ENCODE measurements at regions of chr1 and their contacts with region 1.

Region 1: DNA sequence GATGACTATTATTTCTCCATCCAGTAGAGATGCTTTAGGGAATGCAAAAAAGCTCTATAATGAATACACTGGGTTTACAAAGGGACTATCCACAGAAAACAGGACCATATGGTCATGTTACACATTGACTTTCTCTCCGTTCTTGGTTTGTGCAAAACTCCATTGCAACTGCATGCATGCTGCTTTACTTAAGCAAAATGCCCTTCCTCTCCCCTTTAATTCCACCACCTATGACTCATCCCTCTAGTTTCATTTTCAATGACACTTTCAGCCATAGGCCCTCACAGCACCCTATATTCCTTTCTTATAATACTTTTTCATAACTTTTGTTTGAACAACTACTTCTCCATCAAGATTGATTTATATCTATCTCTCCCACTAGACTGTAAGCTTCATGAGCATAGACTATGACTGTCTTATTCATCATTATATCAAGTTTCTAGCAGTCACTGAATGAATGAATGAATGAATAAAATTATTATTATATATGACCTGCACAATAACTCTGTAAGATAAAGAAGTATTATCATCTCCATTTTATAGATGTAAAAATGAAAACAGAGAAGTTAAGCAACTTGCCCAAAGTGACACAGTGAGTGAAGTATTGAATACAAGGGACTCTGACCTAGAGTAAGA is 248.9 kb downstream of the PLPP3 start:
- DNase-seq: peak; percentile 68
- ATAC-seq: peak; percentile 70
- H3K4me3 ChIP-seq: no peak overlapping the region
- H3K27ac ChIP-seq: no peak overlapping the region
- H3K4me1 ChIP-seq: no peaks in the 10 kb centered on the region; the same call in 1 of the 2 replicates
- H3K27me3 ChIP-seq: no peaks in the 10 kb centered on the region
- CTCF ChIP-seq: no peak
- EP300 ChIP-seq: peak; percentile 41 to 67; a peak in 2 of 4 replicates
- POLR2A ChIP-seq: no peak
- RAD21 ChIP-seq: no peak

Region 2: GRCh38 chr1:56056438-56057287 is 273.8 kb before region 1 on chr1:
- CTCF ChIA-PET with region 1: no interaction called
- POLR2A ChIA-PET with region 1: no interaction called
- RAD21 ChIA-PET with region 1: interaction called, 4 read pairs
- SMC1A ChIA-PET with region 1: no interaction called
- in situ Hi-C with region 1: no loop called
- intact Hi-C with region 1: loop called (anchors 5 kb)
- DNase-seq: no peak
- ATAC-seq: no peak; the same call in 2 of the 3 replicates
- H3K4me3 ChIP-seq: no peak overlapping the region
- H3K27ac ChIP-seq: no peak overlapping the region
- H3K4me1 ChIP-seq: peaks cover 2% of the 10 kb centered on the region
- H3K27me3 ChIP-seq: no peaks in the 10 kb centered on the region
- CTCF ChIP-seq: no peak
- EP300 ChIP-seq: no peak
- POLR2A ChIP-seq: no peak
- RAD21 ChIP-seq: no peak

Region 3: GRCh38 chr1:56235909-56236510 is 94.5 kb before region 1 on chr1:
- CTCF ChIA-PET with region 1: no interaction called
- POLR2A ChIA-PET with region 1: no interaction called
- RAD21 ChIA-PET with region 1: no interaction called
- SMC1A ChIA-PET with region 1: interaction called, 7 read pairs
- in situ Hi-C with region 1: no loop called
- intact Hi-C with region 1: loop called (anchors 5 kb)
- DNase-seq: no peak
- ATAC-seq: no peak
- H3K4me3 ChIP-seq: no peak overlapping the region
- H3K27ac ChIP-seq: no peak overlapping the region
- H3K4me1 ChIP-seq: no peaks in the 10 kb centered on the region
- H3K27me3 ChIP-seq: no peaks in the 10 kb centered on the region
- CTCF ChIP-seq: no peak
- EP300 ChIP-seq: no peak
- POLR2A ChIP-seq: no peak
- RAD21 ChIP-seq: no peak

Region 4: DNA sequence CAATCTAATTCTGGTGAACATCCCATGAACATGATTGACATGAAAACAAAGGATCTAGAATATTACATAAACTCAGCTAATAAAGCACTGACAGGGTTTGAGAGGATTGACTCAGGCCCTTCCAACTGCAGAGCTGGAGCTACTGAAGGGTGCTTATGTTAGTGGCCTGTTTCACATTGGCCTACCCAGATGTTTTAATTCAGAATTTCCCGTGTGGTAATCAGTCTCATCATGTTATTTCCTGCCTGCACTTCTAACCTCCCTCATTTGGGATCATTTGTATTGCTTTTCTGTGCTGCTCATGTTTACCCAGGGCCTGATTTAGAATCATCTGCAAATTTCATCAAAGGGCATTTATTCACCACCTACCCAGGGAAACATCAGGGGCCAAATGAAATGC is 21.4 kb before region 1 on chr1:
- CTCF ChIA-PET with region 1: interaction called, 3 read pairs
- POLR2A ChIA-PET with region 1: interaction called, 4 read pairs
- RAD21 ChIA-PET with region 1: interaction called, 3 read pairs
- SMC1A ChIA-PET with region 1: interaction called, 17 read pairs
- in situ Hi-C with region 1: no loop called
- intact Hi-C with region 1: no loop called
- DNase-seq: no peak
- ATAC-seq: no peak
- H3K4me3 ChIP-seq: no peak overlapping the region
- H3K27ac ChIP-seq: no peak overlapping the region
- H3K4me1 ChIP-seq: no peaks in the 10 kb centered on the region
- H3K27me3 ChIP-seq: peaks cover 0 to 2% of the 10 kb centered on the region in 2 experiments; a peak in 1 of 4 replicates
- CTCF ChIP-seq: no peak
- EP300 ChIP-seq: no peak
- POLR2A ChIP-seq: no peak
- RAD21 ChIP-seq: no peak

Region 5: GRCh38 chr1:56477164-56478111 is 146.9 kb after region 1 on chr1:
- CTCF ChIA-PET with region 1: interaction called, 3 read pairs
- POLR2A ChIA-PET with region 1: interaction called, 9 read pairs
- RAD21 ChIA-PET with region 1: interaction called, 9 read pairs
- SMC1A ChIA-PET with region 1: interaction called, 23 read pairs
- in situ Hi-C with region 1: no loop called
- intact Hi-C with region 1: loop called (anchors 2 kb)
- DNase-seq: peak; percentile 17
- ATAC-seq: peak; percentile 75
- H3K4me3 ChIP-seq: no peak overlapping the region
- H3K27ac ChIP-seq: no peak overlapping the region
- H3K4me1 ChIP-seq: peaks cover 8% of the 10 kb centered on the region; the same call in 1 of the 2 replicates
- H3K27me3 ChIP-seq: peaks cover 0 to 5% of the 10 kb centered on the region in 2 experiments; a peak in 2 of 4 replicates
- CTCF ChIP-seq: no peak
- EP300 ChIP-seq: 0 out of 4 replicates have a peak, but pooled peaks of 1 of the 2 experiments have one; percentile 22
- POLR2A ChIP-seq: no peak
- RAD21 ChIP-seq: no peak

Region 6: DNA sequence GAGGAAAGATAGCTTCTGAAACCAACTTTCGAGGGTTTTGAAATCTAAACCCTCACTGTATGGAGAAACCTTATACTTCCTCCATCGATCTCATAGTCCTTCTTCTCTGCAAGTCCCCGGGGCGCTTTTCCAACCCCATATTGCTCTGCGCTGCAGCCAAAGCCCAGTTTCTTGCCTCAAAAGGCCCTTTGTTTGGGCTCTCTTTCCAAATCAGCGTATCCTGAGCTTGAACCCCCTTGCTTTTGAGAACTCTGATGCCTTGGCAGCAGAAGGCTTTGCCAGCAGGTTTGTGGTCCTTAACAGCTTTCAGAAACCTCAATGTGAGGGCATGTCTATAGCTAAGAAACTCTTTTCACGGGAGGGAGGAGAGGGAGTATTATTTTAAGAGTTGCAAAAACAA is 227.2 kb after region 1 on chr1:
- CTCF ChIA-PET with region 1: no interaction called
- POLR2A ChIA-PET with region 1: interaction called, 3 read pairs
- RAD21 ChIA-PET with region 1: interaction called, 39 read pairs
- SMC1A ChIA-PET with region 1: interaction called, 11 read pairs
- in situ Hi-C with region 1: no loop called
- intact Hi-C with region 1: no loop called
- DNase-seq: no peak
- ATAC-seq: no peak
- H3K4me3 ChIP-seq: no peak overlapping the region
- H3K27ac ChIP-seq: no peak overlapping the region
- H3K4me1 ChIP-seq: no peaks in the 10 kb centered on the region
- H3K27me3 ChIP-seq: no peaks in the 10 kb centered on the region
- CTCF ChIP-seq: no peak
- EP300 ChIP-seq: no peak
- POLR2A ChIP-seq: no peak
- RAD21 ChIP-seq: no peak